IMR-90 (cell line): ENCODE measurements at regions of chrX and their contacts with region 1.

Region 1: DNA sequence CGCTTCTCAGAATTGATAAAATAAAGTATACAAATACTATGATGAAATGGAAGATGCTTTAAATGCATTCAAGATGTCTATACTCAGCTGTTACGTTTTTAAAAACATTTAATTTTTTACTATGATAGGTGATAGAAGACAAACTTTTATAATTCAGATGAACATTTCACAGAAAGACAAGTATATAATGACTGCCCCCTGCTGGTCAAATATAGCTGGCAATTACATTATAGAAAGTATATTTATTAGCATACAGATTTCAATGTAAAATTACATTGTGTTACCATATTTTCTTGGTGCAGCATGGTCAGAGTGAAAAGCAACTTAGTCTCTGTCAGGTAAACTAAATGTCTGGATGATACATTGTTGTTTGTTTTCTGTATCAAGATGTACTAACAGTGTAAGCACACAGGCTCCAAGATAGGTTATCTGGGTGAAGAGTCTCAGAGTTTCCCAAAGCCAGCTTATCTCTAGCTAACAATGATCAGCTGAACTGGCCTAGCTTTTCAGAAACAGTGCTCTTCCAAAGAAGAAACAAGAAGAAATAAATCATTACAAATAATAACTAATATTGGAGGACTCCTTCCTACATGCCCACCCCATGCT is 54.1 kb downstream of the SRPX start:
- DNase-seq: peak; percentile 26
- ATAC-seq: no peak
- H3K4me3 ChIP-seq: no peak overlapping the region
- H3K27ac ChIP-seq: no peak overlapping the region
- H3K4me1 ChIP-seq: no peaks in the 10 kb centered on the region
- H3K27me3 ChIP-seq: no peaks in the 10 kb centered on the region
- CTCF ChIP-seq: peak; percentile 71
- POLR2A ChIP-seq: no peak
- RAD21 ChIP-seq: peak; percentile 57

Region 2: DNA sequence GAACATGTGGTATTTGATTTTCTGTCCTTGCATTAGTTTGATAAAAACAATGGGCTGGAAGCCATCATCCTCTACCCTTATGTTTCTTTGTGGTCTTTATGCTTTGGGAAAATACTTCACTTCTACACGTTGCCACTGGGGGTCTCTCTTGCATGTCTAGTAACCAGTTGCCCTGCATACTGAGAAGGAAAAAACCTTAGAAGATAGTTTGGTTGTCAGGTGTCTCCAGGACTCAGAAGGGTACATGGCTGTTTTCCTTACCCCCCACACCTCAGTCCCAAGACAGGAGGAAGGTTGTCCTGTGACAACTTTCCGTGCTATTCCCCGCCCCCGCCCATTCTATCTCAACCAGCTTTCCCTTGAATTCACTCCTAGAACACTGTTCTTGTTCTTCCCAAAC is 657.2 kb before region 1 on chrX:
- CTCF ChIA-PET with region 1: no interaction called
- POLR2A ChIA-PET with region 1: no interaction called
- dilution Hi-C with region 1: no loop called
- in situ Hi-C with region 1: no loop called
- intact Hi-C with region 1: loop called (anchors 10 kb)
- DNase-seq: no peak
- ATAC-seq: peak; percentile 54; the same call in 1 of the 2 replicates
- H3K4me3 ChIP-seq: no peak overlapping the region
- H3K27ac ChIP-seq: no peak overlapping the region
- H3K4me1 ChIP-seq: no peaks in the 10 kb centered on the region
- H3K27me3 ChIP-seq: no peaks in the 10 kb centered on the region; the same call in none of the 2 replicates
- CTCF ChIP-seq: peak; percentile 29
- POLR2A ChIP-seq: no peak
- RAD21 ChIP-seq: peak; percentile 14; the same call in 1 of the 2 replicates

Region 3: DNA sequence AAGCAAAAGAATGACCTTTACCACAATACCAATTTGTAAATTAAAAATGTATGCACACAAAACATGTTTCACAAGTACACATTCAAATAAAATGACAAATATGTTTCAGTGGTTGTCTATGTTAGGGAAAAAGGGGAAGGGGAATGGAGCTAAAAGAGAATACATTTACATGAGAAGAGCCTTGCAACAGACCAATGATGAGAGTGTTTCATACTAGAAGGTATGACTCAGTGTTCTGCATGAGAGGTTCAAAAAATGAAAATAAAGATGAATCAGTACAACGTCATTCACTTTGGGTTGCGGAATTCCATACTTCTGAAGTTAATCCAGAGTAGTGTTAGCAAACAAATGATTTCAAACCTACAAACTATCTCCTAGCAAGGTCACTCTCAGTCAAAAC is 109.0 kb after region 1 on chrX:
- CTCF ChIA-PET with region 1: no interaction called
- POLR2A ChIA-PET with region 1: no interaction called
- dilution Hi-C with region 1: no loop called
- in situ Hi-C with region 1: no loop called
- intact Hi-C with region 1: no loop called
- DNase-seq: peak; percentile 93
- ATAC-seq: peak; percentile 89
- H3K4me3 ChIP-seq: no peak overlapping the region
- H3K27ac ChIP-seq: peak overlapping the region; percentile 41; the same call in 1 of the 2 replicates
- H3K4me1 ChIP-seq: peaks cover 7% of the 10 kb centered on the region
- H3K27me3 ChIP-seq: no peaks in the 10 kb centered on the region
- CTCF ChIP-seq: no peak
- POLR2A ChIP-seq: no peak
- RAD21 ChIP-seq: no peak